ENCODE measurements at regions of chr5 and their contacts with region 1.

Region 1: GRCh38 chr5:75744355-75744754 is 27.1 kb upstream of the POC5 start:
- DNase-seq: no peak
- ATAC-seq: no peak
- H3K4me3 ChIP-seq: no peak overlapping the region
- H3K27ac ChIP-seq: no peak overlapping the region
- H3K4me1 ChIP-seq: no peaks in the 10 kb centered on the region
- H3K27me3 ChIP-seq: peaks cover 0 to 6% (median 0%) of the 10 kb centered on the region in 9 donors
- CTCF ChIP-seq: no peak
- POLR2A ChIP-seq: no peak

Region 2: DNA sequence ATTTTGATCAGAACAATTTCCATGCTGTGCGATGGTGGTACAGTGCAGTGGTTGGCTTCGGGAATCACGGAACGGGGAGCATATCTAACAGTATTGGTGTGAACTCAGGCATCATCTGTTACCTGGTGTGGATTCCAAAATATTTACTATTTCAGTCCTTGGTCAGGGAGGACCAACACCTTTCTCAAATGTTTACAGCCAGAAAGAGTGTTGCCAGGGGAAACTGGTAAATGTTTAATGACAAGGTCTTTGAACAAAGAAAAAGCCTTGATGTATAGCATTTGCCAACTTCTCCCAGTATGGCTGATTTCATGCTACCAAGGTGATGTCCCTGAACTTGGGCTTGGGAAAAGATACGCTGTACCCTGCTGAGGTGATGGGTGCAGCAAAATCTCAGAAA is 118.5 kb after region 1 on chr5:
- intact Hi-C with region 1: no loop called
- DNase-seq: no peak
- ATAC-seq: no peak
- H3K4me3 ChIP-seq: no peak overlapping the region
- H3K27ac ChIP-seq: no peak overlapping the region
- H3K4me1 ChIP-seq: no peaks in the 10 kb centered on the region
- H3K27me3 ChIP-seq: no peaks in the 10 kb centered on the region
- CTCF ChIP-seq: no peak
- POLR2A ChIP-seq: no peak

Region 3: DNA sequence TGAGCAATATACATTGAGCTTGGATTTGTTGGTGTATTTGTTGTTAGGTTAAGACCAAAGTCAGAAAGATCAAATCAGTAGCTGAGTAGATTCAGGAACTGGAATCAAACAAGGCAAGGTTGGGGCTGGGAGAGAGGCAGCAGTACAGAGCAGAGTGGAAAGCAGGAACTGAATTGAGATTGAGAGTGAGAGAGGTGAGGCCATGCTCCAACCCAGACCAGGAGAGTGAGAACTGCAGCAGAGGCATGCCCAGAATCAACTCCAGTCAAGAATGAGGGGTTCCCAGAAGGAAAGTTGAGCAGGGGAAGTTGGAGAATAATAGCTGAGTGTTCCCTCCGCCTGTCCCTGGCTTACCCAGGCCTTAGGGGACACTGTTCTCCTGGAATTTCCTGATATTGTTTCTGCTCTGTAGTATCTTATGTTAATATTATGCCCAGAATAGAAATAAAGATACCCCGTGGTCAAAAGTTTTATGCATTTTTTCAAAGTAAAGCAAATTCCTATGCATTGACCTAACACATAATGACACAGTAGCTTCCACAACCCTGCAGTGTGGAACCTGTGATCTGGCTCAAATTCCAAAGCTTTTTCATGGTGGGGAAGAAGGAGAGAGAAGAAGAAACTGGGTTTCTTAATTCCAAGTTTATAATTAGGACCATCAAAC is 421.5 kb after region 1 on chr5:
- intact Hi-C with region 1: loop called in 3 of 10 experiments (anchors 10 kb)
- DNase-seq: no peak
- ATAC-seq: no peak
- H3K4me3 ChIP-seq: no peak overlapping the region
- H3K27ac ChIP-seq: no peak overlapping the region
- H3K4me1 ChIP-seq: no peaks in the 10 kb centered on the region
- H3K27me3 ChIP-seq: peaks cover 0 to 3% (median 0%) of the 10 kb centered on the region in 9 donors
- CTCF ChIP-seq: no peak
- POLR2A ChIP-seq: no peak

Measured in heart left ventricle (tissue), 16 donors.